MCF 10A (cell line): ENCODE measurements at regions of chr15 and their contacts with region 1.

Region 1: GRCh38 chr15:77024271-77025082 is 29.6 kb downstream of the PSTPIP1 start:
- DNase-seq: peak; percentile 53
- H3K4me3 Mint-ChIP-seq: no peak overlapping the region
- H3K27ac Mint-ChIP-seq: no peak overlapping the region
- H3K4me1 Mint-ChIP-seq: peaks cover 9% of the 10 kb centered on the region
- H3K27me3 Mint-ChIP-seq: no peaks in the 10 kb centered on the region
- CTCF ChIP-seq: peak; percentile 97

Region 2: GRCh38 chr15:76274226-76274625 is 750.3 kb before region 1 on chr15:
- CTCF ChIA-PET with region 1: no interaction called
- POLR2A ChIA-PET with region 1: no interaction called
- intact Hi-C with region 1: no loop called
- DNase-seq: no peak
- H3K4me3 Mint-ChIP-seq: no peak overlapping the region
- H3K27ac Mint-ChIP-seq: no peak overlapping the region
- H3K4me1 Mint-ChIP-seq: no peaks in the 10 kb centered on the region
- H3K27me3 Mint-ChIP-seq: no peaks in the 10 kb centered on the region
- CTCF ChIP-seq: no peak

Region 3: DNA sequence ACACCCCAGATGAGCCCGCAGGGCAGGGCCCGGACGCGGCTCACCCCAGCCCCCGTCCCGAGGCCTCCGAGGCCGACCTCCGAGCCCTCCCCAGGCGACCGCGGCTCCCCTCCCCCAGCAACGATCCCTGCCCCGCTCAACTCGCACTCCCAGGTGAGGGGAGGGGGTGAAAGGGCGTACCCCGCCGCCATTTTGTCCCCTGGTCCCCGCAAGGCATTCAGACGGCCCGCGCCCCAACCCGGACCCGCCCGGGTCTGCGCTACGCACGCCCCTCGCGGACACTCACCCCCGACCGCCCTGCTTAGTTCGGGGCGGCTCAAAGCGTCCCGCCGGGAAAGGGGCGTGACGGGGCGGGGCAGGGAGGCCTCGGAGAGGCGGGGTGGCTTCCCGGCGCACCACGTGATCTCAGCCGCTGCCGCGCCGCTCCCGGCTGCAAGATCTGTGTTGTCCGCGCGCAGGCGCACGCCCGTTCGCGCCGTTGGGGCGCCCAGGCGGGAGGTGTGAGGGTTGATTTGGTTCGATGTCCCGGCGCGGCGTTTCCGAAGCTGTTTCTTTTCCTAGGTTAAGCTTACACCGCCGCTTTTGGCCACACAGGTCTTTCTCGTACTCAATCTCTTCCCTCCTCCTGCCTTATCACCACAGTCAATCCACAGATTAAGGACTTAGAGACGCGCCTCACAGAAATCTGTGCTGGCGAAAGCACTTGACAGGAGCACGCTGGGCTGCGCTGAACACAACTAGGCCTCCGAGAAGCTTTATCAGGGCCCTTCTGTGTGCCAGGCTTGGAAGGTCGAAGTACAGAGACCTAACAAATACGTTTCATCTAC is 119.3 kb before region 1 on chr15 and contains the start of gene SCAPER:
- CTCF ChIA-PET with region 1: no interaction called
- POLR2A ChIA-PET with region 1: no interaction called
- intact Hi-C with region 1: loop called (anchors 10 kb)
- DNase-seq: peak; percentile 82
- H3K4me3 Mint-ChIP-seq: peak within 1 kb of the TSS; percentile 83
- H3K27ac Mint-ChIP-seq: peak within 1 kb of the TSS; percentile 88
- H3K4me1 Mint-ChIP-seq: peaks cover 7% of the 10 kb centered on the region
- H3K27me3 Mint-ChIP-seq: no peaks in the 10 kb centered on the region
- CTCF ChIP-seq: no peak
- total RNA-seq, gene SCAPER: 9.5 and 13.9 TPM in 2 replicates

Region 4: DNA sequence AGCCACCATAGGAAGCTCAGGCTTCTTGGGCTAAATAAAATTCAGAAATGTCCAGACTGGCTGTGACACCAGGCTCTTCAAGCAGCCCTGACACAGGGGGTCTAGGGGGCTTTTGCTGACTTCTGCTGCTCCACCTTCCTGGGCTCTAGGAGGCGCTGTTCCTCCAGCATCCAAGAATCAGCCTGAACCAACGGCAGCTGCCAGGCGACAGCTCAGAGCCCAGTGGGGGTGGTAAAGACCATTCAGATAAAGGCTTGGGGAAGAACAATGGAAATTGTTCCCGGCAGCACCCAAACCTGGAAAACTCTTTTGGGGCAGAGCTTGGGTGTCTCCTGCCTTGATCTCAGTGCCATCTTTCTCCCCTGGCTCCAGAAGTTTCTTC is 51.1 kb before region 1 on chr15:
- CTCF ChIA-PET with region 1: no interaction called
- POLR2A ChIA-PET with region 1: no interaction called
- intact Hi-C with region 1: no loop called
- DNase-seq: peak; percentile 35
- H3K4me3 Mint-ChIP-seq: no peak overlapping the region
- H3K27ac Mint-ChIP-seq: no peak overlapping the region
- H3K4me1 Mint-ChIP-seq: no peaks in the 10 kb centered on the region
- H3K27me3 Mint-ChIP-seq: no peaks in the 10 kb centered on the region
- CTCF ChIP-seq: no peak

Region 5: DNA sequence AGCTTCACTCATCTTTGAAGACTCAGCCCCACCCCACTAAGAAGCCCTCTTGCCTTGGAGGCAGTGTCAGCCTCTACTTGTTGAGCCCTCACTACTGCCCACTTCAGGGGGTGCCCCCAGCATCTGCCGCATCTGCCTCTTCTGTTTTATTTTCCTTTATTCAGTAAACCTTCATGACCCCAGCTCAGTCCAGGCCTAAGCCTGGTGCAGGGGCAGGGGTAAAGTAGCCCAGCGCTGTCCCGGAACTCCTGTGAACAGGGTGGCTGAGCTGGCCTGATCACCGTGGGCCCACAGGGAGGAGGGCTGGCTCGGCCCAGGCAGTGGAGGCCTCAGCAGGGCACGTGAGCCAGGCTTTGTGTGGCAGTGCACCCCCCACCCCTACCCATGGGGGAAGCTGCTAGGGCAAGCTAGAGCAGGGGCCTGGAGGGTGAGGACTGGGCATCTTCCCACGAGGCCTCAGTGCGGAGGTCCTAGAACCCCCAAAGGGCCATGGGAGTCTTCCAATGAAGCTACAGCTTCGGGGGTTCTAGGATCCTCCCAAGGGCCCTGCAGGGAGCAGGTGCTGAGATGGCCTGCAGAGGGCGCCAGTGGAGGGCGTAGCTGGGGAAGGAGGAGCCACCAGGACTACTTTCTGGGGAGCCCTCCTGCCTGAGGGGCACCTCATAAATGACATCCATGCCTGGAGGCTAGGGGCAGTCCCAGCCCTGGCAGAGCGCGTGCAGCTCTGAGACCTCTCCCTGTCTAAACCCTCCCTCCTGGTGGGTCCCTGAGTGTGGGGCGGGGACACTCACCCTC is 10.4 kb after region 1 on chr15:
- CTCF ChIA-PET with region 1: interaction called, 18 read pairs
- POLR2A ChIA-PET with region 1: no interaction called
- intact Hi-C with region 1: no loop called
- DNase-seq: peak; percentile 24
- H3K4me3 Mint-ChIP-seq: no peak overlapping the region
- H3K27ac Mint-ChIP-seq: no peak overlapping the region
- H3K4me1 Mint-ChIP-seq: no peaks in the 10 kb centered on the region
- H3K27me3 Mint-ChIP-seq: no peaks in the 10 kb centered on the region
- CTCF ChIP-seq: peak; percentile 73